GM23248 (cell line): ENCODE measurements at regions of chr7 and their contacts with region 1.

Region 1: DNA sequence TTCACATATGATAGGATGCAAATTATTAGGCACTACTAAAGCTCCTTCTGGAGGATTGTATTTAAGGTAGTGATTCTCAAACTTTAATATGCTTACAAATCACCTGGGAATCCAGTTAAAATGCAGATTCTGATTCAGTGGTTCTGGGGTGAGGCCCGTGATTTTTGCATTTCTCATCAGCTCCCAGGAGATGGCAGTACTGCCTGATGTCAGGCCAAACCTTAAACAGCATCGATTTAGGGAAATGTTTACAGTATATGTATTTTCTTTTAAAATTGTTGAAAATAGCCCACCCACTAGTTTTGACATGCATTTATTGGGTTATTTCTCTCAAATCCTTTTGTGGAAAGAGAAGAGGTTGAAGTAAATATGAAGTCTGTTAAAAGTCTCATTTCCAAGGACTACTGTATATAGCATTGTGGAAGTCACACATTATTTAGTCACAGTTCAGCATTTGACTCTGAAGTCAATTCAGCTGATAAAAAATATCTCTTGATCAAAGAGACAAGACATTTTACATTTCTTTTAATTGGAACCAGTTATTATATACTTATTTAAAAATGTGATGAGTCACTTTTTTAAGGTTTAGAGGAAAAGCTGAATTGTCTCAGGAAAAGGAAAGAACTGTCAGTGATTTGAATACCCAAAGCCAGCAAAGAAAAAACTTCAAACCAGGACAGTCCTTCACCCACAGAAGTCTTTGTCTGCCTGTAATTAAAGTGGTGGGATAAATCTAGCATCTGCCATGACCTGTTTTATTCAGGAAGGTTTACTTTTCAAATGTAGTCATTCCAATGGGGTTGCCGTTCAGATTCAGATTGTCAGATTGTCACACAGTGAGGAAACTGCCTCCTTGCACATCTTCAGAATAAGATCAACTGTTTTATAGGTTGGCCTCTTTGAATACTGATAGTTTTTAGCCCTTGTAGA is 21.1 kb upstream of the HBP1 start:
- DNase-seq: peak; percentile 76
- H3K4me3 ChIP-seq: peak overlapping the region; percentile 18
- H3K27ac ChIP-seq: no peak overlapping the region
- H3K4me1 ChIP-seq: peaks cover 16% of the 10 kb centered on the region
- H3K27me3 ChIP-seq: no peaks in the 10 kb centered on the region

Region 2: GRCh38 chr7:106793015-106793975 is 354.4 kb before region 1 on chr7:
- in situ Hi-C with region 1: loop called (anchors 10 kb)
- DNase-seq: peak; percentile 30
- H3K4me3 ChIP-seq: no peak overlapping the region
- H3K27ac ChIP-seq: no peak overlapping the region
- H3K4me1 ChIP-seq: no peaks in the 10 kb centered on the region
- H3K27me3 ChIP-seq: no peaks in the 10 kb centered on the region

Region 3: GRCh38 chr7:106947244-106947728 is 200.4 kb before region 1 on chr7:
- in situ Hi-C with region 1: loop called (anchors 5 kb)
- DNase-seq: peak; percentile 80
- H3K4me3 ChIP-seq: no peak overlapping the region
- H3K27ac ChIP-seq: no peak overlapping the region
- H3K4me1 ChIP-seq: no peaks in the 10 kb centered on the region
- H3K27me3 ChIP-seq: peaks cover 18% of the 10 kb centered on the region; the same call in 1 of the 2 replicates